Transverse colon (tissue), 4 donors: ENCODE measurements at regions of chr2 and their contacts with region 1.

Region 1: GRCh38 chr2:141654311-141654710 is 476.5 kb downstream of the LRP1B start:
- DNase-seq: no peak
- H3K4me3 ChIP-seq: no peak overlapping the region
- H3K27ac ChIP-seq: no peak overlapping the region
- H3K4me1 ChIP-seq: no peaks in the 10 kb centered on the region
- H3K27me3 ChIP-seq: no peaks in the 10 kb centered on the region
- CTCF ChIP-seq: no peak
- EP300 ChIP-seq: no peak
- POLR2A ChIP-seq: no peak

Region 2: DNA sequence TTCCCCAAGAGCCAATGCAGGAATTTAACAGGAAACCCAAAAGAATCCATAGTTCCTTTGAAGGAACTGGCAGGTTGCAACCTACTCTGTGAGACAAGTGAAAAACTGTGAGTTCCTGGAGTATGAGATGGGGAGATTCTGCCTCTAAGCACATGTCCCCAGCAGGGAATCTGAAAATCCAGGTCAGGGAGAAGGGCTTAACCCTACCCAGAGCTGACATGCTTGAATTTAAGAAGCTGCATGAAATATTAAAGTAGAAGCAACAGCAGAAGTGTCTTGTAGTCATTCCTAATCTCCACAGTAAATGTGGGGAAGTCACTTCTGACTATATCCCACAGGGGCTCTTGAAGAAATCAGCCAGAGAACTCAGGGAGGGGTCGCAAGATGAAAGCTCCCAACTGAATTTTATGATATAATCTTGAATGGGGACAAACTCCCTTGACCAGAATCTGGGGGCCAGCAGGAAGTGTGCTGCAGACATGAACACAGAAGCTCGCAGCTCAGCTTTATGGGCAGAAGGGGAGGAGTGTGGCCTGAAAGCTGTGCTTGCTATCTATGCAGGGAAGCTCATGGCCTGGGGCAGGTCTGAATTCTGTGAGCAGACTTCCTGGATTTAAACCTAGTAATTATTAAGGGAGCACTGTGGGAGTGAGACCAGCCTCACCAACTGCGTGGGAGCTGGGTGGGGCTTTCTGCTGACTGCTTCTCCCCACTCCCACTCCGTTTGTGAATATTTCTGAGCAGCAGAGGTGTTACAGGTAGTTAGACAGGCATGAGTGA is 1039.0 kb after region 1 on chr2:
- in situ Hi-C with region 1: no loop called
- intact Hi-C with region 1: loop called (anchors 10 kb)
- DNase-seq: no peak
- H3K4me3 ChIP-seq: no peak overlapping the region
- H3K27ac ChIP-seq: no peak overlapping the region
- H3K4me1 ChIP-seq: no peaks in the 10 kb centered on the region
- H3K27me3 ChIP-seq: no peaks in the 10 kb centered on the region
- CTCF ChIP-seq: no peak
- EP300 ChIP-seq: no peak
- POLR2A ChIP-seq: no peak